WTC11 (cell line): ENCODE measurements at regions of chr19 and their contacts with region 1.

Region 1: GRCh38 chr19:5967994-5968430 is 9.9 kb downstream of the RANBP3 start:
- DNase-seq: peak; percentile 77
- ATAC-seq: peak; percentile 70
- H3K4me3 Mint-ChIP-seq: peak overlapping the region; percentile 18
- H3K27ac Mint-ChIP-seq: peak overlapping the region; percentile 97
- H3K4me1 Mint-ChIP-seq: peaks cover 50% of the 10 kb centered on the region
- H3K27me3 Mint-ChIP-seq: no peaks in the 10 kb centered on the region
- CTCF ChIP-seq: peak; percentile 63

Region 2: GRCh38 chr19:5827891-5828660 is 139.9 kb before region 1 on chr19:
- CTCF ChIA-PET with region 1: interaction called, 10 read pairs
- POLR2A ChIA-PET with region 1: no interaction called
- DNase-seq: peak; percentile 93
- ATAC-seq: peak; percentile 75
- H3K4me3 Mint-ChIP-seq: peak overlapping the region; percentile 91
- H3K27ac Mint-ChIP-seq: peak overlapping the region; percentile 97
- H3K4me1 Mint-ChIP-seq: peaks cover 6% of the 10 kb centered on the region
- H3K27me3 Mint-ChIP-seq: no peaks in the 10 kb centered on the region; the same call in none of the 2 replicates
- CTCF ChIP-seq: no peak

Region 3: GRCh38 chr19:5904352-5905113 is 63.5 kb before region 1 on chr19 and contains the start of gene VMAC:
- CTCF ChIA-PET with region 1: interaction called, 21 read pairs
- POLR2A ChIA-PET with region 1: no interaction called
- DNase-seq: peak; percentile 100
- ATAC-seq: peak; percentile 89
- H3K4me3 Mint-ChIP-seq: peak within 1 kb of the TSS; percentile 93
- H3K27ac Mint-ChIP-seq: peak within 1 kb of the TSS; percentile 99
- H3K4me1 Mint-ChIP-seq: peaks cover 4% of the 10 kb centered on the region
- H3K27me3 Mint-ChIP-seq: no peaks in the 10 kb centered on the region
- CTCF ChIP-seq: no peak
- total RNA-seq, gene VMAC: 2.5 to 3.3 TPM (median 3.3 TPM) in 3 replicates

Region 4: GRCh38 chr19:5934774-5935472 is 33.1 kb before region 1 on chr19:
- CTCF ChIA-PET with region 1: interaction called, 12 read pairs
- POLR2A ChIA-PET with region 1: no interaction called
- DNase-seq: no peak
- ATAC-seq: no peak
- H3K4me3 Mint-ChIP-seq: no peak overlapping the region
- H3K27ac Mint-ChIP-seq: no peak overlapping the region; the same call in 1 of the 2 replicates
- H3K4me1 Mint-ChIP-seq: peaks cover 4% of the 10 kb centered on the region; the same call in 1 of the 2 replicates
- H3K27me3 Mint-ChIP-seq: no peaks in the 10 kb centered on the region
- CTCF ChIP-seq: no peak

Region 5: GRCh38 chr19:5947435-5947834 is 20.6 kb before region 1 on chr19:
- CTCF ChIA-PET with region 1: interaction called, 95 read pairs
- POLR2A ChIA-PET with region 1: no interaction called
- DNase-seq: no peak
- ATAC-seq: no peak
- H3K4me3 Mint-ChIP-seq: no peak overlapping the region
- H3K27ac Mint-ChIP-seq: peak overlapping the region; percentile 91; the same call in 1 of the 2 replicates
- H3K4me1 Mint-ChIP-seq: peaks cover 57% of the 10 kb centered on the region
- H3K27me3 Mint-ChIP-seq: no peaks in the 10 kb centered on the region; the same call in 1 of the 2 replicates
- CTCF ChIP-seq: no peak

Region 6: GRCh38 chr19:5987077-5987818 is 19.2 kb after region 1 on chr19:
- CTCF ChIA-PET with region 1: interaction called, 56 read pairs
- POLR2A ChIA-PET with region 1: no interaction called
- DNase-seq: peak; percentile 84
- ATAC-seq: peak; percentile 46
- H3K4me3 Mint-ChIP-seq: no peak overlapping the region
- H3K27ac Mint-ChIP-seq: peak overlapping the region; percentile 46; the same call in 1 of the 2 replicates
- H3K4me1 Mint-ChIP-seq: peaks cover 12% of the 10 kb centered on the region
- H3K27me3 Mint-ChIP-seq: peaks cover 4% of the 10 kb centered on the region
- CTCF ChIP-seq: peak; percentile 90

Region 7: DNA sequence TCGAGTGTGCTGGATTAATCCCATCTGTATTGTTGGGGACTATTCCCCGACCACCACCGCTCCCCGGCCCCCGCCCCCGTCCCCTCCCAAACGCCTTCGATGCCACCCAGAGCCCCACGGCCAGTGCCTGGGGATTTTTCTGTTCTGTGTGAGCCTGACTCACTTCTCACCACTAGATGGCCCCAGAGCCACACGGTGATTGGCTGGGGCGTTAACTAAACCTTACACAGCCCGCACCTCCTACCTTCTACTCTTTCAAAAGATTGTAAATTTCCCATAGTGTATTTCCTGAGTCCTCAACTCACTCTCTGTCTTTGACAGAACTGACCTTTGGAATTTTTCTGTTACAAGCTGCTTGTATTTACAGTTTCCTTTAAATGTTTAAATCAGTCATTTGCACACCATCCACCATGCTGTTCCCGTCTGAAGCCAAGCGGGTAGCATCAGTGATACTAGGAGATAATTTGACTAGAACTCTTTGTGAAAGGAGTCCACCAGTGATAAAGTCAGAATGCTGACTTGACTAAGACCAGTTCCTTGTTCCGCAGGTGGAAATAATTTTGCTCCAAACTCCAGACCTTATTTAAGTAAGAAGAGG is 80.9 kb after region 1 on chr19:
- CTCF ChIA-PET with region 1: interaction called, 14 read pairs
- POLR2A ChIA-PET with region 1: no interaction called
- DNase-seq: peak; percentile 78
- ATAC-seq: peak; percentile 93
- H3K4me3 Mint-ChIP-seq: no peak overlapping the region
- H3K27ac Mint-ChIP-seq: no peak overlapping the region
- H3K4me1 Mint-ChIP-seq: peaks cover 12% of the 10 kb centered on the region; the same call in 1 of the 2 replicates
- H3K27me3 Mint-ChIP-seq: peaks cover 6% of the 10 kb centered on the region; the same call in 1 of the 2 replicates
- CTCF ChIP-seq: peak; percentile 75